ENCODE measurements at regions of chr15 and their contacts with region 1.

Region 1: DNA sequence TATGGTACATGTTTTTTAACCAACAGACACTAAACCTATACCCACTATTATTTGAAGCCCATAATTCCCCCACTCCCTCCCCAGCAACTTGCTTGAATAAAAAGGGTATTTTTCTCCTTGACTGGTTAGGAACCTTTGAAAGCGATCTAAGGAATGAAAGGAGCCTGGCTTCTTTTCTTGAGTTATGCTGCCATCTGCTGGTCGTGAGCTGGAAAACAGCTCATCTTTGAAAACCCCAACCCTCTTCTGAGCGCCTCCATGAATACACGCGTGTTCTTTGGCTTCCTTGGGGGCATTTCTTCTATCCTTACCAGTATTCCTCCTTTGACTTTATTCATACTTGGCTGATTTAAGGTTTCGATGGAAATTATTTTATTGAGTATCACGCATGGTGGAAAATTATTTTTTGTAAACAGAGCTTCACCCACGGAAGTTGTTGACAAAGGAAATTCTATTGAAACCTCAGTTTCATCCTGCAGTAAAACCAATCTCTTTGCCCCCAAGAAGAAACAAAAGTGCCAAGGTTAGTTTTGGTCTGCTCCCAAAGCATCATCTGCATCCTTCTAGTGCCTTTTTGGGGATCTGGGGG is 171.6 kb downstream of the SV2B start:
- DNase-seq: peak; percentile 72
- H3K4me3 Mint-ChIP-seq: peak overlapping the region; percentile 16
- H3K27ac Mint-ChIP-seq: no peak overlapping the region
- H3K4me1 Mint-ChIP-seq: peaks cover 8% of the 10 kb centered on the region
- H3K27me3 Mint-ChIP-seq: peaks cover 17% of the 10 kb centered on the region

Region 2: GRCh38 chr15:91049378-91050127 is 222.1 kb before region 1 on chr15:
- CTCF ChIA-PET with region 1: interaction called, 29 read pairs
- POLR2A ChIA-PET with region 1: no interaction called
- intact Hi-C with region 1: no loop called
- DNase-seq: peak; percentile 72
- H3K4me3 Mint-ChIP-seq: no peak overlapping the region
- H3K27ac Mint-ChIP-seq: no peak overlapping the region
- H3K4me1 Mint-ChIP-seq: peaks cover 16% of the 10 kb centered on the region
- H3K27me3 Mint-ChIP-seq: peaks cover 9% of the 10 kb centered on the region

Region 3: DNA sequence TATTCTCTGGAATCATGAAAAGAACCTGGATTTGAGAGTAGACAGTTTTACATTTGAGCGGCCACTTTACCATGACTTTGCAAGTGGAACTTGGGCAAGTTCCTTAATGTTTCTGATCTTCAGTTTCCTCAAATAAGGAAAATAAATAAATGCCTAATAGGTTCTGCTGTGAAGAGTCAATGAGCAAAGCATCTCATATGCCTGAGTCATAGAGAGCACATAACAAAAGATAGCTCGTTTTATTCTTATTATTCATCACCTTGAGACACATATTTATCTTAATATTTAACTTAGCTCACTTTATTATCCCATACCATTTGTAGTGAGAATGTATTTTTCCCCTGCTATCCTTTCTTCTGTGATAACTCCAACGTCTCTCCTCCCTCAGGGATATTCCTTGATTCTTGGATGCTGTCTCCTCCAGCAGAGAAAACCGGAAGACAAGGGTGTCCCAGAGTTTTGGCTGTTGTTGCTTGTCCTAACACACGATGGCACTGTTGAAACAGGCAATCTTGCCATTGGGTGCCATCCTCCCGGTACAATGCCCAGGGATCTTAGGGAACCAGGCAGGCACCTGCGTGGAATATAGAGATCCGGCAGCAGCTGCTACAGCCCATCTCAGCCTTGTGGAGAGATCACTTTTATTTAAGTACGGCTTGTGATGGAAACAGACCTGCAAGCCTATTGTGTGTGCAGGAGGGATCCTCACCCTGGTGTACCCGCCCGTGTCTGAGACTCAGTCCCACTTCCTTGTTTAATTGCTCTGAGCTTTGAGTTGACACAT is 215.9 kb before region 1 on chr15:
- CTCF ChIA-PET with region 1: interaction called, 84 read pairs
- POLR2A ChIA-PET with region 1: no interaction called
- intact Hi-C with region 1: loop called (anchors 1 kb)
- DNase-seq: peak; percentile 49
- H3K4me3 Mint-ChIP-seq: no peak overlapping the region
- H3K27ac Mint-ChIP-seq: no peak overlapping the region
- H3K4me1 Mint-ChIP-seq: no peaks in the 10 kb centered on the region
- H3K27me3 Mint-ChIP-seq: peaks cover 42% of the 10 kb centered on the region

Region 4: GRCh38 chr15:91113030-91113429 is 158.6 kb before region 1 on chr15:
- CTCF ChIA-PET with region 1: no interaction called
- POLR2A ChIA-PET with region 1: no interaction called
- intact Hi-C with region 1: no loop called
- DNase-seq: no peak
- H3K4me3 Mint-ChIP-seq: no peak overlapping the region
- H3K27ac Mint-ChIP-seq: no peak overlapping the region
- H3K4me1 Mint-ChIP-seq: peaks cover 2% of the 10 kb centered on the region
- H3K27me3 Mint-ChIP-seq: peaks cover 17% of the 10 kb centered on the region

Region 5: DNA sequence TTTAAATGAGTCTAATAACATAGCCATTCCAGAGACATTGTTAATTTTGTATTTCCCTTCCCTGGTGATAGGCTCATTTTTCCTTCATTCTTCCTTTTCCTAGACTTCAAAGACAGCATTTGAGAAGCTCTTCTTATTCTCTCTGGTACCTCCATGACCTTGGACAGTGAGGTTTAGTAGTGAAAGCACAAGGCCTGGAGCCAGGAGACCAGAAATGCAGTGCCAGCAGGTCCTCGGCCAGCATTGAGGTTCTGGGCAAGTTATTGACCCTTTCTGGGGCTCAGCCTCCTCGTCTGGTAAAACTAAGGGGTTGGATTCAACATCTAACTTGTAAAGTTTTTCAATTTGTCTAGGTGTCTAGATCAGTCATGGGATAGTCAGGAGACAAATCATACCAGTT is 24.7 kb before region 1 on chr15:
- CTCF ChIA-PET with region 1: interaction called, 23 read pairs
- POLR2A ChIA-PET with region 1: interaction called, 3 read pairs
- intact Hi-C with region 1: no loop called
- DNase-seq: no peak
- H3K4me3 Mint-ChIP-seq: no peak overlapping the region
- H3K27ac Mint-ChIP-seq: no peak overlapping the region
- H3K4me1 Mint-ChIP-seq: no peaks in the 10 kb centered on the region
- H3K27me3 Mint-ChIP-seq: peaks cover 9% of the 10 kb centered on the region

Region 6: DNA sequence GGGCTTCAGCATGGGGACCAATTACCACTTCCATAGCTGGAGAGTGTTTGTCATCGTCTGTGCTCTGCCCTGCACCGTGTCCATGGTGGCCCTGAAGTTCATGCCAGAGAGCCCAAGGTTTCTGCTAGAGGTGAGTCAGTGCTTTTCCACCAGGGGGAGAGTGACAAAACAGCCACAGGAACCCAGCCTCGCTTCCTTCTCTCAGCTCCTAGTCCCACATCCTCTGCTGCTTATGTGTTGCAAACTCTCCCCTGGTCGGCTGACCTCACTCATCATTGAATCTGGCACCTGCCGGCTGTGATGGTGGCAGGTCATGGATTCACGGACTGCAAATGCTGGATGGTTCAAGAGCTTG is 13.3 kb before region 1 on chr15:
- CTCF ChIA-PET with region 1: interaction called, 12 read pairs
- POLR2A ChIA-PET with region 1: no interaction called
- intact Hi-C with region 1: no loop called
- DNase-seq: peak; percentile 20
- H3K4me3 Mint-ChIP-seq: no peak overlapping the region
- H3K27ac Mint-ChIP-seq: no peak overlapping the region
- H3K4me1 Mint-ChIP-seq: no peaks in the 10 kb centered on the region
- H3K27me3 Mint-ChIP-seq: peaks cover 12% of the 10 kb centered on the region

Region 7: DNA sequence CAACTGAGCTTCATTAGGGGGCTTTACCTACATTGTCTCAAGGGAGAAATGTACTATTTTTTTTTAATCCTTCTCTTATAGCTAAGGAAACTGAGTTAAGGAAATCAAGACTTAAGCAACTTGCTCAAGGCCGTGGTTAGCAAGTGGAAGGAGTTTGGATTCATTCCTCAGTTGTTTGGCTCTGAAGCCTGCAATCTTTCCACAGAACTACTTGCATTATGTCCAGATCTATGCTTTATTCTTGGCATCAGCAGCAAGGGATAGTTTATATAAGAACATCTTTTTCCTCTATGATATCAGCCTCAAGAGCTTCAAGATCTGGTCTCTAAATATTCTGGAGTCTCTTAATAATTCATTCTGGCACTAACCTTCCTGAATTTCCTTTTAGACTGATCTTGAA is 10.8 kb after region 1 on chr15:
- CTCF ChIA-PET with region 1: interaction called, 23 read pairs
- POLR2A ChIA-PET with region 1: no interaction called
- intact Hi-C with region 1: no loop called
- DNase-seq: no peak
- H3K4me3 Mint-ChIP-seq: no peak overlapping the region
- H3K27ac Mint-ChIP-seq: no peak overlapping the region
- H3K4me1 Mint-ChIP-seq: no peaks in the 10 kb centered on the region
- H3K27me3 Mint-ChIP-seq: peaks cover 9% of the 10 kb centered on the region

Region 8: DNA sequence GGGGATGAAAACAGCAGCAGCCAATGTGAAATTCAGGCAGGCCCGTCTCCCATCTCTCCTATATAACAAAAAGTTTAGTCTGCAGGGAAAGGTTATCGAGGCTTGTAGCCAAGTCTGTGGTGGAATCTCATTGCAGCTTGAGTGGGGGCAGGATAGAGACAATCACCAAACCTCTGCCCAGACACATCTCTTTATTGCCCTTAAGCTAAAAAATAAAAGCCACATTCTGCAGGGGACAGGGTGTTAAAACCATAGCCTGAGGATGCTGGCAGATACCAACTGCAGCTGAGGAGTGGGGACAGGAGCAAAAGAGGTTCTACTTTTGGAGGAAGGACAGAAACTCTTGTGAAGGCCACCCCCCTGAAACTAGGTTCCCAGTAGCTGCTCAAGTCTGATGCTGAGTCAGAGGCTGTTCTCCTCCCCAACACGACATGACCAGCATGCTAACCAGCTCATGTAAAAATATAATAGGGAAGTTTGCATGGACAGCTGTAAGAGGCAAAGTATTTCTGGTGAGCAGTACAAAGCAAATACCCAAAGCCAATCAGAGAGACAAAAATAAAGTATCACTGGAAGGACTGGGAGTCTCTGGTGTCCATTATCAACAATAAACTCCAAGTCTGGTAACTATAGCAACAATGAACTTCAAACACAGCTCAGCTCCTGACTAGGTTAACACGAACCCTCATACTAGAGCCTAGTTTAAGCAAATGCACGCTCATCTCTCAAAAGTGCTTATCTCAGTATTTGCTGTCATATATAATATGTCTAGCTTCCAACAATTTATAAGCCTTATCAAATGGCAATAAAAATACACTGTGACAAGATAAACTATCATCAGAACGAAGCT is 219.7 kb after region 1 on chr15:
- CTCF ChIA-PET with region 1: no interaction called
- POLR2A ChIA-PET with region 1: no interaction called
- intact Hi-C with region 1: no loop called
- DNase-seq: no peak
- H3K4me3 Mint-ChIP-seq: no peak overlapping the region
- H3K27ac Mint-ChIP-seq: no peak overlapping the region
- H3K4me1 Mint-ChIP-seq: no peaks in the 10 kb centered on the region
- H3K27me3 Mint-ChIP-seq: no peaks in the 10 kb centered on the region